Mammary epithelial cell (primary cell): ENCODE measurements at regions of chr2 and their contacts with region 1.

Region 1: DNA sequence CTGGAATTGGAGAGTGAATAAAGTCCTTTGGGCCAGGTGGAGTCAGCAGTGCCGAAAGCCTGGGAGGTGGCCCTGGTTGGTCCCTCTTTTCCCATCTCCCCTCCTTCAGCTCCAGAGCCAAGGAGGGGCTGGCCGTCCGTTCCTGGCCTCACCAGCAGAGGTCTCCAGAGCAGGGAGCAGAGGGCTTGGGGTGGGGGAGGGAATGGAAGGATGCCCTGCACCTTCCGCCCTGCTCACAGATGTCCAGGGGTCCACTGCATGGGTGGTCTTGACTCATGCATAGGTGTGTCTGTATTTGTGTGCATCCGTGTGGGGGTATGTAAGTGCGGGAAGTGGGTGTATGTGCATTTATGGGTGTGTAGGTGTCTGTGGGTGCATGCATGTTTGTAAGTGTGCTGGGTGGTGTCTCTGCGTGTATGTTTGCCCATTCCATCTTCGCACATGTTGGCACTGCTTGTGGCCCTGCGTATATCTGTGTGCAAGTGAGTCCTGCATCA is 201.8 kb downstream of the ZFP36L2 start:
- DNase-seq: no peak
- H3K4me3 ChIP-seq: no peak overlapping the region
- H3K27ac ChIP-seq: no peak overlapping the region
- H3K4me1 ChIP-seq: peaks cover 18% of the 10 kb centered on the region
- H3K27me3 ChIP-seq: no peaks in the 10 kb centered on the region
- CTCF ChIP-seq: peak; percentile 63 to 87

Region 2: GRCh38 chr2:42835577-42836371 is 188.8 kb before region 1 on chr2:
- CTCF ChIA-PET with region 1: no interaction called
- dilution Hi-C with region 1: loop called (anchors 10 kb)
- in situ Hi-C with region 1: no loop called
- intact Hi-C with region 1: no loop called
- DNase-seq: peak; percentile 97
- H3K4me3 ChIP-seq: no peak overlapping the region
- H3K27ac ChIP-seq: peak overlapping the region; percentile 26
- H3K4me1 ChIP-seq: peaks cover 11% of the 10 kb centered on the region
- H3K27me3 ChIP-seq: no peaks in the 10 kb centered on the region
- CTCF ChIP-seq: no peak

Region 3: DNA sequence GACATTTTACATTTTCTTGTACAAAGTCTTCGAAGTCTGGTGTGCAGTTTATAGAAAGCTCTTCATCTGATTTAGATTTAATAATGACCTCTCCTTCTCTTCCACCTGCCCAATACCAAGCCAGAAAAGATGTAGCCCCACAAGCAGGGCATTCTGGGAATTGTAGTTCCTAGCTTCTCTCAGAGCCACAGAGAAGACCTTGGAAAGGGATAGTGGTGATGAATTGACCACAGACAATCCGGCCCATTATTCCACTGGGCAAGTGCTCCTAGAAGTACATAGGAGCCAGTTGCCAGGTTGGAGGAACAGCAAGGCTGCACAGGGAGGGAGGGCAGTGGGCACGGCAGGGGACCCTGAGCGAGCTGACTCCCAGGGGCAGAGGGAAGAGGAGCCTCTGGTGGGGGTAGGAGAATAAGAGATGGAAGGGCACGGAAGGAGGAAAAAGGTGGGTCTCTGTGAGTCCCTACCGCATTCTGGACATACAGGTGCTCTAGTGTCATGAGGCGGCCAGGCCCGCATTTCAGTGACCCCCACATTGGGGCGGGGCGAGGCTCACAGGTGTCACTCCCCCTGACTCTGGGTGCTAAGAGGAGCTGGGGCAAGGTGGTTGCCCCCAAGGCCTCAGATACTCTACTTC is 79.7 kb before region 1 on chr2:
- CTCF ChIA-PET with region 1: no interaction called
- dilution Hi-C with region 1: no loop called
- in situ Hi-C with region 1: no loop called
- intact Hi-C with region 1: loop called (anchors 1 kb)
- DNase-seq: peak; percentile 59
- H3K4me3 ChIP-seq: no peak overlapping the region
- H3K27ac ChIP-seq: no peak overlapping the region
- H3K4me1 ChIP-seq: peaks cover 5% of the 10 kb centered on the region
- H3K27me3 ChIP-seq: no peaks in the 10 kb centered on the region
- CTCF ChIP-seq: no peak

Region 4: GRCh38 chr2:43010438-43011157 is 14.0 kb before region 1 on chr2:
- CTCF ChIA-PET with region 1: interaction called, 18 read pairs
- dilution Hi-C with region 1: no loop called
- in situ Hi-C with region 1: no loop called
- intact Hi-C with region 1: no loop called
- DNase-seq: peak; percentile 83
- H3K4me3 ChIP-seq: no peak overlapping the region
- H3K27ac ChIP-seq: peak overlapping the region; percentile 19
- H3K4me1 ChIP-seq: peaks cover 24% of the 10 kb centered on the region
- H3K27me3 ChIP-seq: no peaks in the 10 kb centered on the region
- CTCF ChIP-seq: no peak

Region 5: GRCh38 chr2:43219383-43220228 is 195.0 kb after region 1 on chr2:
- CTCF ChIA-PET with region 1: no interaction called
- dilution Hi-C with region 1: no loop called
- in situ Hi-C with region 1: no loop called
- intact Hi-C with region 1: loop called (anchors 1 kb)
- DNase-seq: peak; percentile 88
- H3K4me3 ChIP-seq: peak overlapping the region; percentile 37 to 44 (median 41)
- H3K27ac ChIP-seq: peak overlapping the region; percentile 88
- H3K4me1 ChIP-seq: peaks cover 46% of the 10 kb centered on the region
- H3K27me3 ChIP-seq: no peaks in the 10 kb centered on the region
- CTCF ChIP-seq: peak in 1 of 2 donors; percentile 3

Region 6: GRCh38 chr2:43484323-43484930 is 459.9 kb after region 1 on chr2:
- CTCF ChIA-PET with region 1: no interaction called
- dilution Hi-C with region 1: no loop called
- in situ Hi-C with region 1: no loop called
- intact Hi-C with region 1: loop called (anchors 1 kb)
- DNase-seq: peak; percentile 50
- H3K4me3 ChIP-seq: no peak overlapping the region
- H3K27ac ChIP-seq: no peak overlapping the region
- H3K4me1 ChIP-seq: peaks cover 9% of the 10 kb centered on the region
- H3K27me3 ChIP-seq: no peaks in the 10 kb centered on the region
- CTCF ChIP-seq: peak; percentile 45 to 51